Colonic mucosa (tissue), 4 donors: ENCODE measurements at regions of chr4 and their contacts with region 1.

Region 1: DNA sequence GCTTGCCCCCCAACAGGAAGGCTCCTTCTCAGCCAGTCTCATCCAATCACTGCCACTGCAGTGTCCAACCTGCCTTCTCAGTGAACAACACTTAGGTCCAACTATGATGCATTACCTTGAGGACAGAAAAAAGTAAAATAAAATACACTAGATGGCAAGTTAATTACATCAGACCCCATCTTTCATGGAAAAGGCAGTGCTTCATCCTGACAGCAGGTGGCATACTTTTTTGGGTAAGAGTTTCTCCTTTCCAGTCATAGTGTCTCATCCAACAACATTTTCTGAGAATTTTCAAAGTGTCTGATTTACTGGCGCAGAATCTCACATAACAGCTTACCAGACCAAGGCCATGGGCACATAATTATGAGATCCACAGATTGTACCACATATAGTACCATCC is 1742.8 kb downstream of the PCDH7 start:
- DNase-seq: no peak
- H3K4me3 ChIP-seq: no peak overlapping the region
- H3K27ac ChIP-seq: no peak overlapping the region
- H3K4me1 ChIP-seq: no peaks in the 10 kb centered on the region
- H3K27me3 ChIP-seq: no peaks in the 10 kb centered on the region
- CTCF ChIP-seq: peak; percentile 19

Region 2: DNA sequence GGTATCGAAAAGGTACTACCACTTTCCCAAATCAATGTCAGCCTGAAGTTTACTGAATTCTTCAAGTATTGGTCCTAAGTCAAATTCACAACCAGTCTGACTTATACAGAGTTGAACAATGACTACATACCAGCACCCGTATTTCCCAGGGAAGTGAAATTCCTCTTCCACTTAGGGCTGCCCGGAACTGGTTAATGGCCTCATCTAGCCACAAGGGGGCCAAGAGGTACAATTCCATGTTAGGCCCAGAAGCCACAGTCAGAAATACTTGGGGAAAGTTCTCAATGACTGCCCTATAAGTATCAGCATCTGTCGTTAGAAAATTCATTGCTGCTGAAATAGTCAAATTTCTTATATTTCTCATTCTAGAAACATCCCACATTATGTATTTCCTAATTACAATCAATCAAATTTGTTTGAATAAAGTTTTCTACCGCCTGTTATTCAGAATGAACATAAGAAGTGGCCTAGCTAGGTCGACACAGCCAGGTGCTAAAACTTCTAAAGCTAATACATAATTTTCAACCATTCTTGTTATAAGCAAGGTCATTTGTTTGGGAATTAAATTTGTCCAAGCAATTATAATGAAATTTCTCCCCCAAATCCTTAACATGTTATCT is 1748.4 kb before region 1 on chr4:
- intact Hi-C with region 1: no loop called
- DNase-seq: peak; percentile 47
- H3K4me3 ChIP-seq: no peak overlapping the region
- H3K27ac ChIP-seq: no peak overlapping the region
- H3K4me1 ChIP-seq: peaks cover 5% of the 10 kb centered on the region
- H3K27me3 ChIP-seq: peaks cover 22% of the 10 kb centered on the region
- CTCF ChIP-seq: peak; percentile 66

Region 3: DNA sequence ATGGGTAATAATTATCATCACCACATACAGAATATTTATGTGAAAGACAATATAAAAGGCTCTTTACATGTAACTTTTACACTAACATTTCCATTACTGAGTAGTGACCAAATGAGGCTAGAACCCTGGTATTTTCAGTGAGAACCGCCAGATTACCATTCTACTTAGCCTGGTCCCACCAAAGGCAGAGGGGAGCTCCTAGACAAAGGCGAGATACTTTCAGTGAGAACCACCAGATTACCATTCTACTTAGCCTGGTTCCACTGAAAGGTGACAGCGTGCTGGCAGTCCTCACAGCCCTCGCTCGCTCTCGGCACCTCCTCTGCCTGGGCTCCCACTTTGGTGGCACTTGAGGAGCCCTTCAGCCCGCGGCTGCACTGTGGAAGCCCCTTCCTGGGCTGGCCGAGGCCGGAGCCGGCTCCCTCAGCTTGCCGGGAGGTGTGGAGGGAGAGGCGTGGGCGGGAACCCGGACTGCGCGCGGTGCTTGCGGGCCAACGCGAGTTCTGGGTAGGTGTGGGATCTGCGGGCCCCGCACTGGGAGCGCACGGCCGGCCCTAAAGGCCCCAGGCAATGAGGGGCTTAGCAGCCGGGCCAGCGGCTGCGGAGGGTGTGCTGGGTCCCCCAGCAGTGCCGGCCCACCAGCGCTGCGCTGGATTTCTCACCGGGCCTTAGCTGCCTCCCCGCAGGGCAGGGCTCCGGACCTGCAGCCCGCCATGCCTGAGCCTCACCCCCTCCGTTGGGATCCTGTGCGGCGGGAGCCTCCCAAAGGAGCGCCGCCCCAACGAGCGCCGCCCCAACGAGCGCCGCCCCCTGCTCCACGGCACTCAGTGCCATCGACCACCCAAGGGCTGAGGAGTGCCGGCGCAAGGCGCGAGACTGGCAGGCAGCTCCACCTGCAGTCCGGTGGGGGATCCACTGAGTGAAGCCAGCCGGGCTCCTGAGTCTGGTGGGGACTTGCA is 466.7 kb before region 1 on chr4:
- intact Hi-C with region 1: no loop called
- DNase-seq: no peak
- H3K4me3 ChIP-seq: no peak overlapping the region
- H3K27ac ChIP-seq: no peak overlapping the region
- H3K4me1 ChIP-seq: no peaks in the 10 kb centered on the region
- H3K27me3 ChIP-seq: no peaks in the 10 kb centered on the region
- CTCF ChIP-seq: no peak

Region 4: GRCh38 chr4:32775032-32775431 is 312.1 kb after region 1 on chr4:
- intact Hi-C with region 1: loop called (anchors 10 kb)
- DNase-seq: no peak
- H3K4me3 ChIP-seq: no peak overlapping the region
- H3K27ac ChIP-seq: no peak overlapping the region
- H3K4me1 ChIP-seq: no peaks in the 10 kb centered on the region
- H3K27me3 ChIP-seq: no peaks in the 10 kb centered on the region
- CTCF ChIP-seq: no peak